T-cell (primary cell): ENCODE measurements at regions of chr16 and their contacts with region 1.

Region 1: DNA sequence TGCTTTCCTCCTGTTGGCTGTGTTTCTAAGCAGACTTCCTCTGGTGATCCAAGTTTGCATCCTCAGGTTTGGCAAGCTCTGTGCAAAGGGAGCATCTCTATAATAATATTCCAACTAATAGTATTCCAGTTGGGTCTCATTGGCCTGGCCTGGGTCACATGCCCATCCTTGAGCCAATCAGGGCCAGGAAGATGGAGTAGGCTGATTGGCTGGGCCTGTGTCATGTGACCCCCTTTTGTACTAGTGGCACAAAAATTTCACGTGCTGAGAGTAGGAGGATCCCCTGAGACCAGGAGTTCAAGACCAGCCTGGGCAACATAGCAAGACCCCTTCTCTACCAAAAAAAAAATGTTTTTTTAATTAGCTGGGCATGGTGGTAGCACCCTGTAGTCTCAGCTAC is 35.2 kb upstream of the MLYCD start:
- DNase-seq: no peak
- ATAC-seq: no peak
- H3K4me3 ChIP-seq: no peak overlapping the region
- H3K4me3 Mint-ChIP-seq: no peak overlapping the region
- H3K27ac ChIP-seq: no peak overlapping the region
- H3K27ac Mint-ChIP-seq: no peak overlapping the region
- H3K4me1 ChIP-seq: no peaks in the 10 kb centered on the region
- H3K4me1 Mint-ChIP-seq: no peaks in the 10 kb centered on the region
- H3K27me3 ChIP-seq: peaks cover 0 to 9% of the 10 kb centered on the region in 2 experiments
- H3K27me3 Mint-ChIP-seq: peaks cover 20 to 23% of the 10 kb centered on the region in 2 donors

Region 2: DNA sequence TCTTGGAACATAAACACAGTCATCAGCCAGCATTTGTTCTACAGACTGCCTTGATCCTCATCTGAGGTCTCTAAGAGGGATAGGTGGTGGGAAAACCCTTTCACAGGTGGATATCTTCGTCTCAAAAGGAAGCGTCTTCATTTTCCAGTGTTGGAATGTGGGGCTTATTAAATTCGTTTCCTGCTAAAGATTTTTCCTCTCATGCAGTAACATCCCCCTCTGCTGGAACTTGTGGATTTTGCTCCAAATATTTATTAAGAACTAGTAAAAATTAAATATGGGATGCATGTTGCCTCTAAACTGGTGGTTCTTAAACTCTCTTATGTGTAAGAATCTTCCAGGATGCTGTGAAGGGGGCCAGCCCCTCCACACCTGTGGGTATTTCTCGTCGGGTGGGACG is 15.2 kb after region 1 on chr16:
- CTCF ChIA-PET with region 1: no interaction called
- POLR2A ChIA-PET with region 1: interaction called in 1 of 2 experiments, 13 read pairs
- DNase-seq: no peak
- ATAC-seq: no peak
- H3K4me3 ChIP-seq: no peak overlapping the region
- H3K4me3 Mint-ChIP-seq: no peak overlapping the region
- H3K27ac ChIP-seq: no peak overlapping the region
- H3K27ac Mint-ChIP-seq: no peak overlapping the region
- H3K4me1 ChIP-seq: no peaks in the 10 kb centered on the region
- H3K4me1 Mint-ChIP-seq: no peaks in the 10 kb centered on the region
- H3K27me3 ChIP-seq: peaks cover 0 to 13% of the 10 kb centered on the region in 2 experiments
- H3K27me3 Mint-ChIP-seq: peaks cover 22 to 27% of the 10 kb centered on the region in 2 donors